ENCODE measurements at regions of chr3 and their contacts with region 1.

Region 1: DNA sequence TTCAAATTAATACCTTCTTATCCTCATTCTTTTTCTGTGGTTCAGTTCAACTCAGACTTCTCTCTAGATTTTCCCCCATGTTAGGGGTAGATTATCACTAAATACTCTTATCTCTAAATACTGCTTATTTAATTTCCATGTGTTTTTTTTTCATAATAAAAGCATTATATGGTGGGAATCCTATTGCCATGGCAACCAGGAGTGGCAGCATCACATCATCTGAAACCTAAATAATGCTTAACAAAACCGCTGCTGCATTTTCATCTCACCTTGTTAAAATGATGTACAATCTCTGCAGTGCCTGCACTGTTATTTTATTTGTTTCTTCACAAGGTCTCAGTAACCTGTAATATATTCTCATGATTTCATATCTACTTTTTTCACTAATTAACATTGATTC is 709.6 kb downstream of the OTOL1 start:
- DNase-seq: no peak
- ATAC-seq: no peak
- H3K4me3 ChIP-seq: no peak overlapping the region
- H3K27ac ChIP-seq: no peak overlapping the region
- H3K4me1 ChIP-seq: no peaks in the 10 kb centered on the region
- H3K27me3 ChIP-seq: no peaks in the 10 kb centered on the region
- CTCF ChIP-seq: no peak
- POLR2A ChIP-seq: no peak

Region 2: DNA sequence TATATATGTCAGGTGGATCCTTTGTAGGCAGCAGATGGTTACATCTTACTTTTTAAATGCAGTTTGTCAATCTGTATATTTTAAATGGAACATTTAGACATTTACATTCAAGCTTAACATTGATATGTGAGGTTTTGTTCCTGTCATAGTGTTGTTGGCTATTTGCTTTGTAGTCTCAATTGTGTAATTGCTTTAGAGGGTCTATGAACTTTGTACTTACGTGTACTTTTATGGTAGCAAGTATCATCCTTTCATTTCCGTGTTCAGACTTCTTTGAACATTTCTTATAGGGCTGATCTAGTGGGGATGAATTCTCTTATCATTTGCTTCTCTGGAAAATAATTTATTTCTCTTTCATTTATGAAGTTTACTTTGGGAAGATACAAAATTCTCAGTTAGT is 53.5 kb before region 1 on chr3:
- intact Hi-C with region 1: loop called in 1 of 10 experiments (anchors 5 kb)
- DNase-seq: no peak
- ATAC-seq: no peak
- H3K4me3 ChIP-seq: no peak overlapping the region
- H3K27ac ChIP-seq: no peak overlapping the region
- H3K4me1 ChIP-seq: no peaks in the 10 kb centered on the region
- H3K27me3 ChIP-seq: no peaks in the 10 kb centered on the region
- CTCF ChIP-seq: no peak
- POLR2A ChIP-seq: no peak

Measured in heart left ventricle (tissue), 16 donors.